BJ (cell line): ENCODE measurements at regions of chr6 and their contacts with region 1.

Region 1: GRCh38 chr6:53153976-53154470 is 5.4 kb upstream of the GCM1 start:
- DNase-seq: no peak
- H3K4me3 ChIP-seq: no peak overlapping the region
- H3K27me3 ChIP-seq: no peaks in the 10 kb centered on the region
- CTCF ChIP-seq: no peak

Region 2: DNA sequence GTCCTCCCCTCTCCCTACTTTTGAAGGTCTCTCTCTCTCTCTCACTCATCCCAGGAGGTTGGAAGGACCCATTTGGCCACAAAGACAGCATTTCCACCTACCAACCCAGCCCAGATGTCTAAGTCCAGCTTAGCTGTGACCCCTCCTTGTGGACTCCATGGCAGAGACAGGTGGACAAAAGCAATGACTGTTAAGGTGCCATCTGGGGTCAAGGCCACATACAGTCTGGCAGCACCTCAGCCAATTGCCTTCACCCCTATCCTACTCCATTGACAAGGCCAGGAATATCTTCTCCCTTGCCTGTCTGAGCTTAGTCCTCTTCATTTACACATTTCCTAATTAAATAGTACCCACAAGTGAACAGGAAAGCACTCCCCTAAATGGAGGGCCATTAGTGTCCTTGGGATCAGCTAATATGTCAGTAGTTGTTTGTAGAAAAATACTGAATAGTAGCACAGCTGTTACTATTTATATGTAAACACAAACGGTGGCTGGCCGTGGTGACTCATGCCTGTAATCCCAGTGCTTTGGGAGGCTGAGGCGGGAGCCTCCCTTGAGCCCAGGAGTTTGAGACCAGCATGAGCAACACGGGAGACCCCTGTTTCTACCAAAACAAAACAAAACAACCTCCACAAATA is 34.1 kb before region 1 on chr6:
- CTCF ChIA-PET with region 1: no interaction called
- POLR2A ChIA-PET with region 1: interaction called, 14 read pairs
- DNase-seq: peak; percentile 46
- H3K4me3 ChIP-seq: no peak overlapping the region
- H3K27me3 ChIP-seq: no peaks in the 10 kb centered on the region
- CTCF ChIP-seq: no peak

Region 3: GRCh38 chr6:53139841-53140413 is 14.1 kb before region 1 on chr6:
- CTCF ChIA-PET with region 1: no interaction called
- POLR2A ChIA-PET with region 1: no interaction called
- DNase-seq: no peak
- H3K4me3 ChIP-seq: no peak overlapping the region
- H3K27me3 ChIP-seq: peaks cover 7% of the 10 kb centered on the region
- CTCF ChIP-seq: no peak